GM18951 (cell line): ENCODE measurements at regions of chrX and their contacts with region 1.

Region 1: GRCh38 chrX:150704030-150704613 is 10.9 kb downstream of the MTMR1 start:
- POLR2A ChIP-seq: no peak

Region 2: GRCh38 chrX:149962859-149963757 is 741.0 kb before region 1 on chrX:
- in situ Hi-C with region 1: loop called (anchors 25 kb)
- POLR2A ChIP-seq: no peak